Naive thymus-derived CD4-positive, alpha-beta T cell (primary cell): ENCODE measurements at regions of chr20 and their contacts with region 1.

Region 1: DNA sequence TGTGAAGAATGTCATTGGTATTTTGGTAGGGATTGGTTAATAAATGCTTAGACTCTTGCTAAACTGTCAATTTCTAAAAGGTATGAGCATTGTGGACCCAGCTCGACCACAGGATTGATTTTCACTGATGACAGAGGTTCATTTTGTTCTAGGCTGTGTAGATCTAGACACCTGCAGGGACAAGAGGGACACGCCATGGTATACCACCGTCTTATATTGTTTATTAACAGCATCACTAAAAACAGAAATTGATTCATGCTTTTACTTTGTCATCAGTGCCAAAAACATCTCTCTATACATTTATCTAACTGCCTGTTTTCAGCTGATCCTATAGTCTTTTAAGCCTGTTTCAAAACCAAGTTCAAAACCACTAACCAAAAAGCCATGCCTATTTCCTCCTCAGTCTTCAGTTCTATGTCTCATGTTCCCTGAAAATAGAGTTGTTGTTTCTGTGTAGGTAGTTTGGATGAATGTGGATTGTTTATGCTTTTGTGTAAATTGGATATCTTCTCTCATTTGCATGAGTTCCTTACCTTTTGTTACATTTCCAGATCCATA is 109.8 kb downstream of the JAG1 start:
- DNase-seq: no peak
- ATAC-seq: no peak
- H3K4me3 ChIP-seq: no peak overlapping the region
- H3K4me3 Mint-ChIP-seq: peak overlapping the region in 1 of 10 donors; percentile 52
- H3K27ac ChIP-seq: no peak overlapping the region
- H3K27ac Mint-ChIP-seq: peak overlapping the region in 1 of 9 donors; percentile 24
- H3K4me1 ChIP-seq: peaks cover 0 to 10% of the 10 kb centered on the region in 2 donors
- H3K4me1 Mint-ChIP-seq: peaks cover 6 to 47% (median 8%) of the 10 kb centered on the region in 7 donors
- H3K27me3 ChIP-seq: no peaks in the 10 kb centered on the region
- H3K27me3 Mint-ChIP-seq: no peaks in the 10 kb centered on the region

Region 2: GRCh38 chr20:10282979-10283456 is 281.0 kb before region 1 on chr20:
- CTCF ChIA-PET with region 1: no interaction called
- POLR2A ChIA-PET with region 1: no interaction called
- intact Hi-C with region 1: no loop called
- DNase-seq: no peak
- ATAC-seq: no peak
- H3K4me3 ChIP-seq: no peak overlapping the region
- H3K4me3 Mint-ChIP-seq: no peak overlapping the region
- H3K27ac ChIP-seq: no peak overlapping the region
- H3K27ac Mint-ChIP-seq: no peak overlapping the region
- H3K4me1 ChIP-seq: no peaks in the 10 kb centered on the region
- H3K4me1 Mint-ChIP-seq: no peaks in the 10 kb centered on the region
- H3K27me3 ChIP-seq: no peaks in the 10 kb centered on the region
- H3K27me3 Mint-ChIP-seq: peaks cover 5 to 29% (median 20%) of the 10 kb centered on the region in 5 donors

Region 3: DNA sequence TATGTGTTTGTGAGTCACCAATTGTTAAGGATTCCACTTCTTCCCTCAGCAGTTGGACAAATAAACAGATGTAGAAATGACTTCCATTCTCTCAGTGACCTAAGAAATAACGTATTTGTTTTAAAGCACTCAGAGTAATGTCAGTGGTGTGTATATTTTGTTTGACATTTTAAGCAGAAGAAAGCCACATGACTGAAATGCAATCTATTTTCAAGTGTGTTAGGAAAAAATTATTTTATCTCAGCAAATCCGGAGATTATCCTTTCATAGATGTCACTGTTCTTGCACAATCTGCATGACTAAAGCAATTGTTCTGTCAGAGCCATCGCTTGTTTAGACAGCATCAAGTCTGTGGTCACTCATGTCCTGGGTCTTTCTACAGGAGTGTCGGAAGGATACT is 32.7 kb after region 1 on chr20:
- CTCF ChIA-PET with region 1: no interaction called
- POLR2A ChIA-PET with region 1: no interaction called
- intact Hi-C with region 1: loop called in 1 of 2 experiments (anchors 5 kb)
- DNase-seq: no peak
- ATAC-seq: peak; percentile 52
- H3K4me3 ChIP-seq: no peak overlapping the region
- H3K4me3 Mint-ChIP-seq: no peak overlapping the region
- H3K27ac ChIP-seq: no peak overlapping the region
- H3K27ac Mint-ChIP-seq: no peak overlapping the region
- H3K4me1 ChIP-seq: no peaks in the 10 kb centered on the region
- H3K4me1 Mint-ChIP-seq: peaks cover 0 to 9% (median 0%) of the 10 kb centered on the region in 7 donors
- H3K27me3 ChIP-seq: no peaks in the 10 kb centered on the region
- H3K27me3 Mint-ChIP-seq: no peaks in the 10 kb centered on the region